ENCODE measurements at regions of chr16 and their contacts with region 1.

Region 1: DNA sequence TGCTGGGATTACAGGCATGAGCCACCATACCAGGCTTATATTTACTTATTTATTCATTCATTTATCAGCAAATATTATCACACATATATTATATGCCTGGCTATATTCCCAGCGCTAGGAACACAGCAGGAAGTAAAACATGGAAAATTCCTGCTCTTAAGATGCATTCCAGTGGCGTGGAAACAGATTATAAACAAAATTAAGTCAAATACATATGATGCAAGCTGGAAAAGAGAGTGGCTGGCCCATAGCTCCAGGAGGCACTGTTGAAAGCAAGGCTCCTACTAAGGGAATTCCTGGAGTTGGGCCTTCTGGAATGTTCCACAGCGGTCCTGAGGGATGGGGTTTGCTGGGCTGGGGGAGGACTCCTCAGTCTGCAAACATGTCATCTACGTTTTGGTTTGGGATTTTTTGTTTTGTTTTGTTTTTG is 18.4 kb downstream of the ADCY9 start:
- DNase-seq: peak; percentile 43
- ATAC-seq: no peak

Region 2: DNA sequence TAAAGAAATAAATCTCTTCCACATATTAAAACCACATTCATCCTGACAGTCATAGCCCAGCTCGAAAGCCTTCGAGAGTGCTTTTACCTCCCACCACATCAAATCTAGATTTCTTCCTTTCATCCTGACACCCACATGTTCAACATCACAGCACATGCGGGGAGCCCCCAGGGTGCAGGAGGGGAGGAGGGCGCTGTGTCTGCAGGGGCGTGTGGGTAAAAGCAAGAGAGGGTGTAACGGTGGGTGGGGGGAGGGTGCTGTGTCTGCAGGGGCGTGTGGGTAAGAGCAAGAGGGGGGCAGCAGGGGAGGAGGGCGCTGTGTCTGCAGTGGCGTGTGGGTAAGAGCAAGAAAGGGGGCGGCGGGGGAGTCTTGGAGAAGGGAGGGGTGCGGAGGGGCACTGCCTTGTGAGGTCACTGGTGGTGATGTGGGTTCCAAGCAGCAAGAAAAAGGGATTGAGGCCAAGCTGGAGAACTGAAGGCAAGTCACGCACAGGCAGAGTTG is 16.3 kb before region 1 on chr16:
- intact Hi-C with region 1: loop called (anchors 1 kb)
- DNase-seq: no peak
- ATAC-seq: peak; percentile 55

Measured in sciatic nerve (tissue), 2 donors.